Activated T-helper 1 cell treated with anti-CD3 and anti-CD28 coated beads, Interleukin-12 subunit alpha, Interleukin-12 subunit beta, Interleukin-2, Interleukin-4 antibody, amounts not matched to agents 30 ng/mL and 10 ng/mL and 1 ng/mL, durations not matched to agents 14 hours and 24 hours and 36 hours (primary cell): ENCODE measurements at regions of chr11 and their contacts with region 1.

Region 1: GRCh38 chr11:85779956-85780640 is 30.8 kb downstream of the SYTL2 start:
- DNase-seq: no peak
- H3K4me3 Mint-ChIP-seq: no peak overlapping the region
- H3K27ac Mint-ChIP-seq: no peak overlapping the region
- H3K4me1 Mint-ChIP-seq: peaks cover 61% of the 10 kb centered on the region
- H3K27me3 Mint-ChIP-seq: no peaks in the 10 kb centered on the region

Region 2: GRCh38 chr11:85766721-85767161 is 13.4 kb before region 1 on chr11:
- intact Hi-C with region 1: loop called (anchors 1 kb)
- DNase-seq: no peak
- H3K4me3 Mint-ChIP-seq: no peak overlapping the region
- H3K27ac Mint-ChIP-seq: no peak overlapping the region
- H3K4me1 Mint-ChIP-seq: peaks cover 84% of the 10 kb centered on the region
- H3K27me3 Mint-ChIP-seq: no peaks in the 10 kb centered on the region